ENCODE measurements at regions of chr2 and their contacts with region 1.

Region 1: DNA sequence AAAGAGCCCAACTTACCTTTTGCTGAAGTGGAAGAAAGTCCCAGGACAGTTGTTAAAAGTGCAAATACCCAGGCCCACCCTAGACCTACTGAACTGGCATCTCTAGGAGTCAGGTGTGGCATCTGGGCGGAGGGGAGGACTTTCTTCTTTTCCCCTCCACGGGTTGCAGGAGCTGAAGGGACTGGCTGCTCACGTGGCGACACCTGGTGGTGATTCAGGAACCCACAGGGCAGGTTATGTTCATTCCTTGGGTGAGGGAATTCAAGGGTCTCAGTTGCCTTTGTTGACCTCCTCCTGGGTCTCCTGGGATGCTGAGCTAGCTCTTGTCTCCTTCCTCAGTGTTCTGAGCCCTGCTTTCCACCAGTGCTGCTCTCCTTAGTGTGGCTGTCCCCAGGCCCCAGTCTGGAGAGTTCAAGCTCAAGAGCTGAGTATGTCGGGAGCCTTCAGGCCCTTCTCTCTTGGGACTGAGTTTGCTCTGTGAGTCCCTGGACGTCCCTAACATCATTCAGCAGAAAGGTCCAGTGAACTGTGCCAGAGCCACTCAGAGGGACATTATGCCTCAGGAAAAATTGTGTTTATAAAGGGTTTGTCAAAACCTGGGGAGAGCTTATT is 56.9 kb downstream of the DYSF start:
- DNase-seq: peak; percentile 42 to 72 (median 66)
- ATAC-seq: peak; percentile 65
- H3K4me3 ChIP-seq: no peak overlapping the region
- H3K4me3 Mint-ChIP-seq: no peak overlapping the region
- H3K27ac ChIP-seq: no peak overlapping the region
- H3K27ac Mint-ChIP-seq: no peak overlapping the region
- H3K4me1 ChIP-seq: no peaks in the 10 kb centered on the region
- H3K4me1 Mint-ChIP-seq: peaks cover 0 to 3% (median 0%) of the 10 kb centered on the region in 7 donors
- H3K27me3 ChIP-seq: no peaks in the 10 kb centered on the region
- H3K27me3 Mint-ChIP-seq: peaks cover 0 to 5% (median 2%) of the 10 kb centered on the region in 5 donors

Region 2: GRCh38 chr2:71018625-71019024 is 491.7 kb before region 1 on chr2:
- CTCF ChIA-PET with region 1: interaction called, 3 read pairs
- POLR2A ChIA-PET with region 1: interaction called, 3 read pairs
- intact Hi-C with region 1: loop called in 1 of 2 experiments (anchors 1 kb)
- DNase-seq: no peak
- ATAC-seq: peak; percentile 20
- H3K4me3 ChIP-seq: no peak overlapping the region
- H3K4me3 Mint-ChIP-seq: no peak overlapping the region
- H3K27ac ChIP-seq: no peak overlapping the region
- H3K27ac Mint-ChIP-seq: no peak overlapping the region
- H3K4me1 ChIP-seq: no peaks in the 10 kb centered on the region
- H3K4me1 Mint-ChIP-seq: peaks cover 4 to 7% (median 7%) of the 10 kb centered on the region in 7 donors
- H3K27me3 ChIP-seq: no peaks in the 10 kb centered on the region
- H3K27me3 Mint-ChIP-seq: peaks cover 0 to 6% (median 0%) of the 10 kb centered on the region in 5 donors

Region 3: GRCh38 chr2:71157124-71157793 is 353.0 kb before region 1 on chr2:
- CTCF ChIA-PET with region 1: interaction called, 4 read pairs
- POLR2A ChIA-PET with region 1: no interaction called
- intact Hi-C with region 1: loop called (anchors 1 kb)
- DNase-seq: peak; percentile 16 to 53 (median 47)
- ATAC-seq: peak; percentile 83
- H3K4me3 ChIP-seq: no peak overlapping the region
- H3K4me3 Mint-ChIP-seq: peak overlapping the region in 2 of 10 donors; percentile 47 to 65
- H3K27ac ChIP-seq: no peak overlapping the region
- H3K27ac Mint-ChIP-seq: peak overlapping the region in 1 of 9 donors; percentile 63
- H3K4me1 ChIP-seq: no peaks in the 10 kb centered on the region
- H3K4me1 Mint-ChIP-seq: peaks cover 5 to 10% (median 7%) of the 10 kb centered on the region in 7 donors
- H3K27me3 ChIP-seq: no peaks in the 10 kb centered on the region
- H3K27me3 Mint-ChIP-seq: peaks cover 0 to 6% (median 4%) of the 10 kb centered on the region in 5 donors

Region 4: GRCh38 chr2:71299507-71299906 is 210.8 kb before region 1 on chr2:
- CTCF ChIA-PET with region 1: interaction called, 144 read pairs
- POLR2A ChIA-PET with region 1: interaction called, 4 read pairs
- intact Hi-C with region 1: loop called in 1 of 2 experiments (anchors 1 kb)
- DNase-seq: peak in 5 of 9 donors; percentile 24 to 47 (median 36)
- ATAC-seq: peak; percentile 41
- H3K4me3 ChIP-seq: no peak overlapping the region
- H3K4me3 Mint-ChIP-seq: no peak overlapping the region
- H3K27ac ChIP-seq: no peak overlapping the region
- H3K27ac Mint-ChIP-seq: no peak overlapping the region
- H3K4me1 ChIP-seq: no peaks in the 10 kb centered on the region
- H3K4me1 Mint-ChIP-seq: no peaks in the 10 kb centered on the region
- H3K27me3 ChIP-seq: no peaks in the 10 kb centered on the region
- H3K27me3 Mint-ChIP-seq: peaks cover 4 to 14% (median 6%) of the 10 kb centered on the region in 5 donors

Region 5: GRCh38 chr2:71460595-71461303 is 49.6 kb before region 1 on chr2:
- CTCF ChIA-PET with region 1: no interaction called
- POLR2A ChIA-PET with region 1: no interaction called
- intact Hi-C with region 1: loop called in 1 of 2 experiments (anchors 2 kb)
- DNase-seq: no peak
- ATAC-seq: no peak
- H3K4me3 ChIP-seq: no peak overlapping the region
- H3K4me3 Mint-ChIP-seq: no peak overlapping the region
- H3K27ac ChIP-seq: no peak overlapping the region
- H3K27ac Mint-ChIP-seq: no peak overlapping the region
- H3K4me1 ChIP-seq: no peaks in the 10 kb centered on the region
- H3K4me1 Mint-ChIP-seq: peaks cover 0 to 5% (median 0%) of the 10 kb centered on the region in 7 donors
- H3K27me3 ChIP-seq: peaks cover 0 to 7% of the 10 kb centered on the region in 2 donors
- H3K27me3 Mint-ChIP-seq: peaks cover 3 to 18% (median 14%) of the 10 kb centered on the region in 5 donors

Measured in naive thymus-derived CD4-positive, alpha-beta T cell (primary cell).